ENCODE measurements at regions of chr12 and their contacts with region 1.

Region 1: GRCh38 chr12:14845350-14845750 is 2.0 kb upstream of the ART4 start:
- DNase-seq: peak; percentile 7 to 73 (median 39)
- ATAC-seq: peak; percentile 71
- H3K4me3 ChIP-seq: no peak overlapping the region
- H3K4me3 Mint-ChIP-seq: no peak overlapping the region
- H3K27ac ChIP-seq: no peak overlapping the region
- H3K27ac Mint-ChIP-seq: no peak overlapping the region
- H3K4me1 ChIP-seq: peaks cover 9% of the 10 kb centered on the region
- H3K4me1 Mint-ChIP-seq: peaks cover 8% of the 10 kb centered on the region
- H3K27me3 ChIP-seq: no peaks in the 10 kb centered on the region
- H3K27me3 Mint-ChIP-seq: no peaks in the 10 kb centered on the region
- CTCF ChIP-seq: peak; percentile 88

Region 2: DNA sequence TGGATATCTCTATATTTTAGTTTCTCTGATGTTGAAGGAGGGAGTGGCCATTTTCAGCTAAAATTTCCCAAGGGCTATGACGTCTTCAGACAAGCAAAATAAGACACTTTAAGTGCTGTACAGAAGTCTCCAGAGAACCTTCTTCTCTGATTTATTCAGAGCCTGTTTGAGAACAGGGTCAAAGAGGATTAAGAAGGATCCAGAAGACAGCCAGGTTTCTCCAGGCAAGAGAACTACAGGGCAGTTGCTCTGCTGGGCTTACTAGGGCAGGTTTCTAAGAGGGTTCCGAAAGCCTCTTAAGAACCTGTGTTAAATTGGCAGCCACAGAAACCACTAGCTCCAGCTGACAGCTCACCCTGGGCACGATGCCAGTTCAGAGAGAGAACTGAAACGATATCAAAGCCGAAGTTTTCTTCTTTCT is 39.1 kb after region 1 on chr12:
- CTCF ChIA-PET with region 1: interaction called, 6 read pairs
- POLR2A ChIA-PET with region 1: no interaction called
- intact Hi-C with region 1: loop called (anchors 1 to 5 kb)
- DNase-seq: peak; percentile 69 to 94 (median 89)
- ATAC-seq: peak; percentile 90
- H3K4me3 ChIP-seq: no peak overlapping the region
- H3K4me3 Mint-ChIP-seq: peak overlapping the region; percentile 58
- H3K27ac ChIP-seq: peak overlapping the region in 1 of 2 experiments; percentile 7
- H3K27ac Mint-ChIP-seq: peak overlapping the region; percentile 89
- H3K4me1 ChIP-seq: peaks cover 38% of the 10 kb centered on the region
- H3K4me1 Mint-ChIP-seq: peaks cover 37% of the 10 kb centered on the region
- H3K27me3 ChIP-seq: peaks cover 0 to 6% of the 10 kb centered on the region in 2 experiments
- H3K27me3 Mint-ChIP-seq: peaks cover 7% of the 10 kb centered on the region
- CTCF ChIP-seq: no peak

Region 3: DNA sequence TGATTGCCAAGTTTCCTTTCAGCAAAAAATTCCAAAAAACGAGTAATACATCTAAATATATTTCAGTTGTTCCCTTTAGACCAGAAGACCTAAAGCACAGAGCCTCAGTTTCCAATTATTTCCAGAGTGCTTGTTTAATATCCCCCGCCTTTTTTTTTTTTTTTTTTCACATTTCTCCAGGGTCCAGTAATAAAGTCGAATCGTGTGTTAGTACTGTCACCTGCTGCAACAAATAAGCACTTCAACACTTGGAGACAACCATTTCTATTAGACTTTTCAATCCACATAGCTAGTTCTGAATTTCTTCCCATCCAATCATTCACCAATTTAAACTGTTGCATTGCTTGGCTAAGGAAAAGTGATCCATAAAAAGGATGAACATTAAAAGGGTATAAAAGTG is 141.1 kb after region 1 on chr12:
- CTCF ChIA-PET with region 1: interaction called, 6 read pairs
- POLR2A ChIA-PET with region 1: interaction called, 3 read pairs
- intact Hi-C with region 1: loop called in 1 of 2 experiments (anchors 2 kb)
- DNase-seq: peak in 2 of 9 experiments; percentile 28 to 43
- ATAC-seq: no peak
- H3K4me3 ChIP-seq: no peak overlapping the region
- H3K4me3 Mint-ChIP-seq: no peak overlapping the region
- H3K27ac ChIP-seq: no peak overlapping the region
- H3K27ac Mint-ChIP-seq: no peak overlapping the region
- H3K4me1 ChIP-seq: peaks cover 31% of the 10 kb centered on the region
- H3K4me1 Mint-ChIP-seq: peaks cover 41% of the 10 kb centered on the region
- H3K27me3 ChIP-seq: no peaks in the 10 kb centered on the region
- H3K27me3 Mint-ChIP-seq: no peaks in the 10 kb centered on the region
- CTCF ChIP-seq: no peak

Region 4: GRCh38 chr12:14995583-14996425 is 150.5 kb after region 1 on chr12:
- CTCF ChIA-PET with region 1: interaction called, 111 read pairs
- POLR2A ChIA-PET with region 1: interaction called, 4 read pairs
- intact Hi-C with region 1: loop called (anchors 1 kb)
- DNase-seq: peak in 2 of 9 experiments; percentile 78 to 85
- ATAC-seq: peak; percentile 70
- H3K4me3 ChIP-seq: no peak overlapping the region
- H3K4me3 Mint-ChIP-seq: peak overlapping the region; percentile 20
- H3K27ac ChIP-seq: no peak overlapping the region
- H3K27ac Mint-ChIP-seq: peak overlapping the region; percentile 63
- H3K4me1 ChIP-seq: peaks cover 29% of the 10 kb centered on the region
- H3K4me1 Mint-ChIP-seq: peaks cover 31% of the 10 kb centered on the region
- H3K27me3 ChIP-seq: no peaks in the 10 kb centered on the region
- H3K27me3 Mint-ChIP-seq: peaks cover 2% of the 10 kb centered on the region
- CTCF ChIP-seq: peak; percentile 75

Region 5: DNA sequence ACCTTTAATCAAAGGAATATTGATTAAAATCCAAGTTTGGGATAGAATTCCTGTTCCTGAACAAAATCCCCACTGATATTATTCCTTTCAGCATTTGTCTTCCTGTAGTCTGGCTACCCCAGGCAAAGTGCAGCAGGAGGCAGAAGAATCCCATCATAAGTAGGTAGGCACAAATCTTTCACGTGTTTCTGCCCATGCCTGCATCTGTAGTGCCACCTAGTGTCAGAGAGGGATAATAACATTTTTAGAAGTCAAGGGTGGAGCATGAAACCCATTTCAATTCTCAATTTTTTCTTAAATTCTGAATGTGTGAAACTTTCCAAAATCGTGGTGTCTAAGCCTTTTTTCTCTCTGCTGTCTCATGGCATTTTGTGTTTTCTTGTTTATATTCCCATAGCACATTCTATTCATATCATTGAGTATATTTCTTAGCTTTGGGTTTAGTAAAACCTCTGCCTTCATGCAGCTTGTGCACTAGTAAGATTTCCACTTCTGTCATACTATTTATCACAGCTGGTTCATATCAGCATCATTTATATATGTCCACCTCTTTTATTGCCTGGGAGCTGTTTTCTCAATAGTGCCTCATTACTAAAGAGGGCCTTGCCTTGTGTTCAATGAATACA is 423.7 kb after region 1 on chr12:
- CTCF ChIA-PET with region 1: interaction called, 7 read pairs
- POLR2A ChIA-PET with region 1: no interaction called
- intact Hi-C with region 1: loop called (anchors 1 to 5 kb)
- DNase-seq: peak in 5 of 9 experiments; percentile 18 to 71 (median 27)
- ATAC-seq: peak; percentile 72
- H3K4me3 ChIP-seq: no peak overlapping the region
- H3K4me3 Mint-ChIP-seq: no peak overlapping the region
- H3K27ac ChIP-seq: no peak overlapping the region
- H3K27ac Mint-ChIP-seq: no peak overlapping the region
- H3K4me1 ChIP-seq: no peaks in the 10 kb centered on the region
- H3K4me1 Mint-ChIP-seq: no peaks in the 10 kb centered on the region
- H3K27me3 ChIP-seq: no peaks in the 10 kb centered on the region
- H3K27me3 Mint-ChIP-seq: peaks cover 5% of the 10 kb centered on the region
- CTCF ChIP-seq: peak; percentile 89